ENCODE measurements at regions of chr3 and their contacts with region 1.

Region 1: GRCh38 chr3:179981646-179982045 is 55.1 kb downstream of the PEX5L start:
- DNase-seq: no peak
- H3K4me3 ChIP-seq: no peak overlapping the region
- CTCF ChIP-seq: no peak
- POLR2A ChIP-seq: no peak

Region 2: GRCh38 chr3:178100862-178101261 is 1880.8 kb before region 1 on chr3:
- intact Hi-C with region 1: loop called (anchors 10 kb)
- DNase-seq: no peak
- H3K4me3 ChIP-seq: no peak overlapping the region
- CTCF ChIP-seq: no peak
- POLR2A ChIP-seq: no peak

Region 3: GRCh38 chr3:180134619-180135018 is 153.0 kb after region 1 on chr3:
- intact Hi-C with region 1: no loop called
- DNase-seq: no peak
- H3K4me3 ChIP-seq: no peak overlapping the region
- CTCF ChIP-seq: no peak
- POLR2A ChIP-seq: no peak

Measured in lower leg skin (tissue), 4 donors.